Naive thymus-derived CD8-positive, alpha-beta T cell (primary cell): ENCODE measurements at regions of chr2 and their contacts with region 1.

Region 1: GRCh38 chr2:190235101-190235500 is 84.5 kb downstream of the HIBCH start:
- DNase-seq: no peak
- ATAC-seq: no peak
- H3K4me3 Mint-ChIP-seq: no peak overlapping the region
- H3K27ac Mint-ChIP-seq: no peak overlapping the region
- H3K4me1 Mint-ChIP-seq: peaks cover 0 to 6% (median 0%) of the 10 kb centered on the region in 4 donors
- H3K27me3 Mint-ChIP-seq: no peaks in the 10 kb centered on the region

Region 2: DNA sequence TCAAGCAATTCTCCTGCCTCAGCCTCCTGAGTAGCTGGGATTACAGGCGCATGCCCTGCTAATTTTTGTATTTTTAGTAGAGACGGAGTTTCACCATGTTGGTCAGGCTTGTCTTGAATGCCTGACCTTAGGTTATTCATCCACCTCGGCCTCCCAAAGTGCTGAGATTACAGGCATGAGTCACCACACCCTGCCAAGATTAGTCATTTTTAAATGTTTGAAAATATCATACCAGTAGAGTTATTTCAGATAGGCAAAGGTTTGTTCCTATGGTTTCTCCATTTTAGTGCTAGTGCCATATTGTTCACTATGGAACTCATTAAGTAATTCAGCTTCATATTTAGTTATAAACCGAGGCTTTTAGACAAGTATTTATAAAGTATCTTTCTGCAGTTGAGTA is 32.2 kb after region 1 on chr2:
- POLR2A ChIA-PET with region 1: interaction called, 10 read pairs
- DNase-seq: no peak
- ATAC-seq: no peak
- H3K4me3 Mint-ChIP-seq: no peak overlapping the region
- H3K27ac Mint-ChIP-seq: no peak overlapping the region
- H3K4me1 Mint-ChIP-seq: peaks cover 0 to 4% (median 2%) of the 10 kb centered on the region in 4 donors
- H3K27me3 Mint-ChIP-seq: no peaks in the 10 kb centered on the region